ENCODE measurements at regions of chr17 and their contacts with region 1.

Region 1: DNA sequence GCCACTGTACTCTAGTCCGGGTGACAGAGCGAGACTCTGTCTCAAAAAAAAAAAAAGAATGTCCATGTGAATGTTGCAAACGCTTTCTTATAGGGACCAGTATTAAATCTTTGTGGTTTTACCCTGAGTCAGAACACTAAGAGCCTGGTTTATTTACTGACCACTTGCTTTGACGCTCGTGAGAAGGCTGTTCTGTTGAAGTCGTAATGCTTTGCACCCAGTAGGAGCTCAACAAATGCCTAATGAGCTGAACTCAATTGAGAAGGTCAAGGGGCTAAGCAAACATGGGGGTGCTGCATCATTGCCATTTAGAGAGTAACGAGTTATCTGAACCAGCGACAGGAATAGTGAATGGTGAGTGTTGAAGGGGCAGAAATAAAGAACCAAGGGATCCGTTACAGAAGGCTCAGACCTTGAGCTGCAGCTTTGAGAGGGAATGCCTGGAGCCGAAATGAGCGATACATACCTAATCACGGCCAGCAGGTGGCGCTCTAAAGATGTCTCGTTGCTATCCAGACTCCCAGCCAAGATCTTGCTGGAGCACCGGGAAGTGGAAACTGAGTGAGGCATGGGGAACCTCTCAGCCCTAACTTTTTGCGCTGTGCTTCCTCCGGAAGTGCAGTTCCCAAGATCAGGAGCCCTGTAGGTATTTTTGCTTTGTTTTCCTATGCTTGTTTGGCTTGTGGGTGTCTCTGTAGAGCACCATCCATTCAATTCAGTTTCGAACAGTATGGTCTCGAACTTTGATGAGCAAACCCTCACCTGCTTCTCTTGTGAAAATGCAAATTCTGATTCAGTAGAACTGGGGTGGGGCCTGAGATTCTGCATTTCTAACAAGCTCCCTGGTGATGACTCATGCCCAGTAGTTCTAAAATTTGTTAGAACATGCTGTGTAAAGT is 12.6 kb upstream of the RNF222 start:
- DNase-seq: peak; percentile 87
- H3K4me3 Mint-ChIP-seq: peak overlapping the region; percentile 8
- H3K27ac Mint-ChIP-seq: no peak overlapping the region
- H3K4me1 Mint-ChIP-seq: peaks cover 14% of the 10 kb centered on the region
- H3K27me3 Mint-ChIP-seq: peaks cover 8% of the 10 kb centered on the region

Region 2: GRCh38 chr17:8420041-8420934 is 10.1 kb after region 1 on chr17:
- CTCF ChIA-PET with region 1: interaction called, 13 read pairs
- intact Hi-C with region 1: no loop called
- DNase-seq: no peak
- H3K4me3 Mint-ChIP-seq: no peak overlapping the region
- H3K27ac Mint-ChIP-seq: no peak overlapping the region
- H3K4me1 Mint-ChIP-seq: no peaks in the 10 kb centered on the region
- H3K27me3 Mint-ChIP-seq: peaks cover 15% of the 10 kb centered on the region

Region 3: GRCh38 chr17:8435245-8436168 is 25.3 kb after region 1 on chr17 and contains the start of gene NDEL1:
- CTCF ChIA-PET with region 1: interaction called, 8 read pairs
- intact Hi-C with region 1: loop called (anchors 2 kb)
- DNase-seq: peak; percentile 99
- H3K4me3 Mint-ChIP-seq: peak within 1 kb of the TSS; percentile 96
- H3K27ac Mint-ChIP-seq: peak within 1 kb of the TSS; percentile 93
- H3K4me1 Mint-ChIP-seq: peaks cover 32% of the 10 kb centered on the region
- H3K27me3 Mint-ChIP-seq: no peaks in the 10 kb centered on the region
- total RNA-seq, gene NDEL1: 43.1 to 47.1 TPM

Region 4: DNA sequence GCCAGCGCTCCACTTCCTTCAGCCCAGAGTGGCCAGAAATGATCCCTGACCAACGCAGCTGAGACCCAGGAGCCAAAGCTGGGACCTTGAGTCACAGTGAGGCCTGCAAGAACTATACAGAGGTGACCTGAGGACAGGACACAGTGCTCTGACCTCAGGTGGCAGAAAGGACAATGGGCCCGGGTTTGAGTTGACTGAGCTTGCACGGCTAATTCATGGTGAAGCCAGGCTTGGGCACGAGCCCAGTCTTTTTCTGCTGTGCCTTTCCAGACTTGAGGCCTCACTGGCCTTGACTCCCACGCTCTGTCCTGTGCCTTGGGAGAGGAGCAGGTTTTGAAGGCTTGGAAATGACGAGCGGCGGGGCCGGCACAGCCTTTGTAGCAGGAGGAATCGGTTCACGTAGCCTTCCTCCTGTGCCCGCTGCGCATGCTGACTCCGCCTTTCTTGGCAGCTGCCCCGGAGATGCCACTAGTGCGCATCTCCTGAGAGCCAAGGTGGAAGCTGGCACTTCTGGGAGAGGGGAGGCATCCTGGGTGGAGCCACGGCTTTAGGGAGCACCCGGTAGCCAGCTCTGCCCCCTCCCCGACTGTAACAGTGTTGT is 60.3 kb after region 1 on chr17:
- CTCF ChIA-PET with region 1: no interaction called
- intact Hi-C with region 1: no loop called
- DNase-seq: no peak
- H3K4me3 Mint-ChIP-seq: no peak overlapping the region
- H3K27ac Mint-ChIP-seq: no peak overlapping the region
- H3K4me1 Mint-ChIP-seq: no peaks in the 10 kb centered on the region
- H3K27me3 Mint-ChIP-seq: no peaks in the 10 kb centered on the region

Region 5: GRCh38 chr17:8740486-8740885 is 330.3 kb after region 1 on chr17:
- CTCF ChIA-PET with region 1: interaction called, 29 read pairs
- intact Hi-C with region 1: loop called (anchors 1 kb)
- DNase-seq: peak; percentile 64
- H3K4me3 Mint-ChIP-seq: peak overlapping the region; percentile 60
- H3K27ac Mint-ChIP-seq: peak overlapping the region; percentile 50
- H3K4me1 Mint-ChIP-seq: peaks cover 13% of the 10 kb centered on the region
- H3K27me3 Mint-ChIP-seq: no peaks in the 10 kb centered on the region

Region 6: DNA sequence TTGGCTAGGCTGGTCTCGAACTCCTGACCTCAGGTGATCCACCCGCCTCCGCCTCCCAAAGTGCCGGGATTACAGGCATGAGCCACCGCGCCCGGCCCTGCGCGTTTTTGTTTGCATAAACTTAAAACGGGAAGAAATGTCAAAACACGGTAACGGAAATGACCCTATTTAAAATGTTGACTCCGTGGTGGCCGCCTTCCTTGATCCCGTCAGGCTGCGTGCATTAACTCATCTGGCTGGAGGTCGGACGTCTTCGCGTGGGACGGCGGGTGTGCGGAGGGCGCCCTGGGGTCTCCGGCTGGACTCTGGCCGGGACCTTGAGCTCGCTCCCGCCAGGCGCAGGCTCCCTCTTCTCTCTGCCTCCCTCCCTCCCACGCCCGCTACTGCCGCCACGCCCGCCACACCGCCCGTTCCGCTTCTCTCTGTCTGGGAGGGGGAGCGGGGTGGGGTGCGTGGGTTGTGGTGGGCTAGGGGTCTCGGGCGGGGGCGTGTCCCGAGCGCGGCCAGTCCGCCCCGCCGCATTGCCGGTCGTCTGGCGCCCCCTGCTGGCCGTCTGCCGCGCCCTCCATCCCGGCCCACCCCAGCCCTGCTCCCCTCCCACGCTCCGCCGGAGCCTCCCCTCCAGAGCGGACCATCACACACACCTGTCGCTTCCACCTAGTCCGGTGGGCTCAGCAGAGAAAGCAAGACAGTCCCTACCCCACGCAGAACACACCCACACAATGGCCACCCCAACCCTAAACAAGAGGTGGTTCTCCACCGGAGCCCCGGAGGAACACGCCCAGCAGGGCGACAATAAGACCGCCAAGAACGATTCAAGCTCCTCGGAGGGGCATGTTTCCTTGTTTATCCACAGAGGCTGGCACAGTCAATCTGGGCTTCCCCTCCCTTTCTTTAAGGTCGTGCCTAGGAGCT is 335.6 kb after region 1 on chr17:
- CTCF ChIA-PET with region 1: interaction called, 29 read pairs
- intact Hi-C with region 1: loop called (anchors 1 kb)
- DNase-seq: peak; percentile 74
- H3K4me3 Mint-ChIP-seq: peak overlapping the region; percentile 81
- H3K27ac Mint-ChIP-seq: peak overlapping the region; percentile 53
- H3K4me1 Mint-ChIP-seq: peaks cover 8% of the 10 kb centered on the region
- H3K27me3 Mint-ChIP-seq: no peaks in the 10 kb centered on the region

Region 7: DNA sequence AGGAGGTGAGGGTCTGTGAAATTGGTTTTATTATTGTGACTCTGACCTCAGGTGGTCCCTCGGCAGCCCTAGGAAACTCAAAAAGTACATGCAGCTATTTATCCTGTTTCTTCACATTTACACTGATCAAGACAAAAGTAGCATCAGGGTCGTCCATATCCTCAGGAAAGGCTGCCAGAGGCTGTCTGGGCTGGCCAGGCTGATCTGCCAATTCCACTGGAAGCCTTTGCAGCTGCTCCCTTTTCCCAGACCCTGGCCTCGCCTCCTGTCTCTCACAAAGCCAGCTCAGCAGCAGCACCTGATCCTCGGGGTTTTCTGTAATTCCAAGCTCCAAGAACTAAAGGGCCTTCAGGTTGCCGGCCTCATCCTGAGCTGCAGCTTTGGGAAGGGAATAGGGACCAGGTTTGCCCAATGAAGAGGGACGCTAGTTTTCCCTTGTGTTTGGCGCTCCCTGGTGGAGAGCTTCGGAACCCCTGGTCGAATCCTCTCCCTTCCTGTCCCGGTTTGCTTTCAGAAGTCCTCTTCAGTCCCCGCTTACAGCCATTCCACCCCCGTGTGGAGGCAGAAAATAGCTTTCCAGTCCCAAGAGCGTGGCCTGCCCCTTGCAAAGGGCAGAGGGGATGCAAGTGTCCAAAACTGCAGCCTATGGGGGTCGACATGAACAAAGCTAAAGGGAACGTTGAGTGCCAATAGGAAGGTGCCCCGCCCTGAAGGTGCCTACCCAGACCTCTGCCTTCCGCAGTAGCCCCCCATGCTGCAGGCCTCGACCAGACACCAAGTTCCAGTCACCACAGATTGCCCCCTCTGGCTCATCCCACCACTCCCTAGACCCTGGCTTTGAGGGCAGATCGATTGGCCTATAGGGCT is 375.6 kb after region 1 on chr17:
- CTCF ChIA-PET with region 1: interaction called, 15 read pairs
- intact Hi-C with region 1: loop called (anchors 2 kb)
- DNase-seq: peak; percentile 83
- H3K4me3 Mint-ChIP-seq: no peak overlapping the region
- H3K27ac Mint-ChIP-seq: no peak overlapping the region
- H3K4me1 Mint-ChIP-seq: peaks cover 2% of the 10 kb centered on the region
- H3K27me3 Mint-ChIP-seq: no peaks in the 10 kb centered on the region

Region 8: DNA sequence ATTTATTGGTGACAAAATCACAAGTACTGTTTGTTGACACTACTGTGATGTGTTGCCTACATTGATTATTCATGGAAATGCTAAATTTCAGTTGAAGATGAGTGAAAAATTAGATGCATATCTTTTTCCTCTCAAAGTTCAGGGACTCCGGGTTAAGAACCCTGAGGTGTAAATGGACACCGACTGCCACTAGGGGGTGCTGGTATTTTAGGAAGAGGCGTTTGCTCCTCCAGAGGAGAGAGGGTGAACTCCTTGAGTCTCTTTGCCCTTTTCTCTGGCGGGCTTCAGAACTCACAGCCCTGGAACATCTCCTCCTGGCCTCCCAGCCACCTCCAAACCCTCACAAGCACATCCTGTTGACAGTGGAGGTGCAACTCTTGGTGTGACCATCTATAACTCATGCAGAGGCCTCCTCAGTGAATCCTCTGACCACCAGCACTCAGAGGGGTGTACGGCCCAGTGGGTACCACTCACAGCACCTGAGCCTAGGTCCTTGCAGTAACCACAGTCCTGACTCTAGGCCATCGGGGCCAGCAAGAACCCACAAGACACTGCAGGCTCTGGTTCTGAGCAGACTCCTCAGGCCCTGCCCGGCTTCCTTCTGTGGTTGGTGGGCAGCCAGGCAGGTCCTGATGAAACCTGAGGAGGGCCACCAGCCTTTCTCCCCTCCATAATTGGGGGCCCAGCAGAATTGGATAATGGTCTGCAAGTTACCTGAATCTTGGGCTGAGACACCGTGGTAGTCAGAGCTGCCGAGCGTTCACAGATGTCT is 581.5 kb after region 1 on chr17:
- CTCF ChIA-PET with region 1: no interaction called
- intact Hi-C with region 1: loop called (anchors 10 kb)
- DNase-seq: peak; percentile 86
- H3K4me3 Mint-ChIP-seq: no peak overlapping the region
- H3K27ac Mint-ChIP-seq: no peak overlapping the region
- H3K4me1 Mint-ChIP-seq: peaks cover 5% of the 10 kb centered on the region
- H3K27me3 Mint-ChIP-seq: no peaks in the 10 kb centered on the region